GM12878 (cell line): ENCODE measurements at regions of chr11 and their contacts with region 1.

Region 1: GRCh38 chr11:41413843-41414242 is 45.6 kb downstream of the LRRC4C start:
- DNase-seq: no peak
- ATAC-seq: peak; percentile 91
- H3K4me3 ChIP-seq: no peak overlapping the region
- H3K27ac ChIP-seq: no peak overlapping the region
- H3K4me1 ChIP-seq: no peaks in the 10 kb centered on the region
- H3K27me3 ChIP-seq: no peaks in the 10 kb centered on the region; a peak in 1 of 4 replicates
- CTCF ChIP-seq: no peak
- EP300 ChIP-seq: 0 out of 4 replicates have a peak, but pooled peaks of 1 of the 2 experiments have one; percentile 31
- POLR2A ChIP-seq: no peak
- RAD21 ChIP-seq: no peak

Region 2: DNA sequence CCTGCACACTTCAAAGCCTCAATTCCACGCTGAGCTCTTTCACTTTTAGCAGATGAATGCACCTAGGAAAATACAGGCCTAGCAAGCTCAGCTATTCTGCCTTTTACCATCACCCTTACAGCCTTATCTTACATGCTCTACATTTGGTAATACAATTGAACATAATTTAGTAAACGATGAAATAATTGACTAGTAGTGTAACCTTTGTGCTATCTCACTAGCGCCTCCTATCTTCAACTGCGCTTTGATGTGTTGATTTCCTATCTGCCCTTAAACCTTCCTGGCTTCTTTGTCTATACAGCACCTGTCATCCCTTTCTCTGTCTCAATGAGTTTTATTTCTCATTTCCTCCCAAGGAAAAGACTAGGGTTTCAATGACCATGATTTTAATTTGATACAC is 104.1 kb before region 1 on chr11:
- CTCF ChIA-PET with region 1: interaction called, 3 read pairs
- POLR2A ChIA-PET with region 1: interaction called, 4 read pairs
- RAD21 ChIA-PET with region 1: interaction called, 15 read pairs
- SMC1A ChIA-PET with region 1: interaction called, 8 read pairs
- in situ Hi-C with region 1: no loop called
- intact Hi-C with region 1: loop called (anchors 5 kb)
- DNase-seq: no peak
- ATAC-seq: peak; percentile 30
- H3K4me3 ChIP-seq: no peak overlapping the region
- H3K27ac ChIP-seq: no peak overlapping the region
- H3K4me1 ChIP-seq: peaks cover 8% of the 10 kb centered on the region
- H3K27me3 ChIP-seq: no peaks in the 10 kb centered on the region; a peak in 1 of 4 replicates
- CTCF ChIP-seq: peak in 2 of 3 experiments; percentile 17 to 20; a peak in 2 of 6 replicates
- EP300 ChIP-seq: no peak
- POLR2A ChIP-seq: no peak
- RAD21 ChIP-seq: no peak

Region 3: DNA sequence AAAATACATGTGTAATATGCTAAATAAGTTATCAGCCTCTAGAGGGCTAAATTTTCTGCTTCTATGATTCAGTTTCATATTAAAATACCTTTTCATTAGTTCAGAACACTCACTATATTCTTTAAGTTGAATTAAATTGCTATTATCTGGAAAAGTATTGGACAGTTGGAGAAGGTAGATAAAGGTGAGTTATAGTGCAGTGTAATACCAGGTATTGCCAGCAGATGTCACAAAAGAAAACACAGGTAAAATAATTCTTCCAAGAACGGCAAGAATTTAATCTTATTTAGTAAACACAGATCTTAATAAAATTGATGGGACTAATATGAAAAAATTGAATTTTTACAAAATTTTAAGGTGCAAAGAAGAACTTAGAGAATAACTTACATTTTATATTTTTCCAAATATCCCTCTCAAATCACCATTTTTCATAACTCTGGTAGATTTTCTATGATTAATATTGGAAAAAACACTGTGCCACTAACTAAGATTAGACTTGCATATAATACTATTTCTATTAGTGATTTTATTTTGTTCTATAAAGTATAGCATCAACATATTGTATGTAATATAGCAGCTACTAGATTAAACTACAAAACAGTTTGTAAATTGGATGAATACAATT is 47.3 kb after region 1 on chr11:
- CTCF ChIA-PET with region 1: no interaction called
- POLR2A ChIA-PET with region 1: no interaction called
- RAD21 ChIA-PET with region 1: no interaction called
- SMC1A ChIA-PET with region 1: no interaction called
- in situ Hi-C with region 1: no loop called
- intact Hi-C with region 1: no loop called
- DNase-seq: no peak
- ATAC-seq: no peak
- H3K4me3 ChIP-seq: no peak overlapping the region
- H3K27ac ChIP-seq: no peak overlapping the region
- H3K4me1 ChIP-seq: no peaks in the 10 kb centered on the region
- H3K27me3 ChIP-seq: peaks cover 0 to 2% of the 10 kb centered on the region in 2 experiments; a peak in 1 of 4 replicates
- CTCF ChIP-seq: peak; percentile 47 to 62 (median 59)
- EP300 ChIP-seq: no peak
- POLR2A ChIP-seq: no peak
- RAD21 ChIP-seq: peak; percentile 47